Ovary (tissue), 10 donors: ENCODE measurements at regions of chr14 and their contacts with region 1.

Region 1: DNA sequence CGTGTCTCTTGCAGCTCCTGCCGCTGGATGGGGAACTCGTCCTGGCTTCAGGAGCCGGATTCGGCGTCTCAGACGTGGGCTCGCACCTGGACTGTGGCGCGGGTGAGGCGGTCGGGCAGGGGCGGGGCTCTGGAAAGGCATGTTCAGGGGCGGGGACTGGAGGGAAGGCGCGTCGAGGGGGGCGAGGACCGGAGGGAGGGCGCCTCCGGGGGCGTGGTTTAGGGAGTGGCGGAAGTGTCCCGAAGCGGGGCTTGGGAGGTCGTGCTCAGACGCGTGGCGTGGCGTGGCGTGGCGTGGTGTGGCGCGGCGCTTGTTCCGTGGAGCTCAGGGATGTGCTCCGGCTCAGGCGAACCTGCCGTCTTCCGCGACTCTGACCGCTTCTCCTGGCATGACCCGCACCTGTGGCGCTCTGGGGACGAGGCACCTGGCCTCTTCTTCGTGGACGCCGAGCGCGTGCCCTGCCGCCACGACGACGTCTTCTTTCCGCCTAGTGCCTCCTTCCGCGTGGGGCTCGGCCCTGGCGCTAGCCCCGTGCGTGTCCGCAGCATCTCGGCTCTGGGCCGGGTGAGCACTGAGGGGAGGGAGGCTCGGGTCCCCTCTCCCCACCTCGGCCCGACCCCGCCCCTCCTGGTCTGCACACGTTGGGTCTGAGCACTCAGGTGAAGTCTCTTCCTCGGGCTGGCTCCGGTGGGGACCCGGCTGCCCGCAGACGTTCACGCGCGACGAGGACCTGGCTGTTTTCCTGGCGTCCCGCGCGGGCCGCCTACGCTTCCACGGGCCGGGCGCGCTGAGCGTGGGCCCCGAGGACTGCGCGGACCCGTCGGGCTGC is 6.2 kb downstream of the AMN start:
- DNase-seq: peak; percentile 56 to 77 (median 60)
- H3K4me3 ChIP-seq: peak overlapping the region; percentile 27
- H3K27ac ChIP-seq: no peak overlapping the region
- H3K4me1 ChIP-seq: peaks cover 14% of the 10 kb centered on the region
- H3K27me3 ChIP-seq: no peaks in the 10 kb centered on the region
- CTCF ChIP-seq: no peak
- EP300 ChIP-seq: no peak
- POLR2A ChIP-seq: no peak

Region 2: DNA sequence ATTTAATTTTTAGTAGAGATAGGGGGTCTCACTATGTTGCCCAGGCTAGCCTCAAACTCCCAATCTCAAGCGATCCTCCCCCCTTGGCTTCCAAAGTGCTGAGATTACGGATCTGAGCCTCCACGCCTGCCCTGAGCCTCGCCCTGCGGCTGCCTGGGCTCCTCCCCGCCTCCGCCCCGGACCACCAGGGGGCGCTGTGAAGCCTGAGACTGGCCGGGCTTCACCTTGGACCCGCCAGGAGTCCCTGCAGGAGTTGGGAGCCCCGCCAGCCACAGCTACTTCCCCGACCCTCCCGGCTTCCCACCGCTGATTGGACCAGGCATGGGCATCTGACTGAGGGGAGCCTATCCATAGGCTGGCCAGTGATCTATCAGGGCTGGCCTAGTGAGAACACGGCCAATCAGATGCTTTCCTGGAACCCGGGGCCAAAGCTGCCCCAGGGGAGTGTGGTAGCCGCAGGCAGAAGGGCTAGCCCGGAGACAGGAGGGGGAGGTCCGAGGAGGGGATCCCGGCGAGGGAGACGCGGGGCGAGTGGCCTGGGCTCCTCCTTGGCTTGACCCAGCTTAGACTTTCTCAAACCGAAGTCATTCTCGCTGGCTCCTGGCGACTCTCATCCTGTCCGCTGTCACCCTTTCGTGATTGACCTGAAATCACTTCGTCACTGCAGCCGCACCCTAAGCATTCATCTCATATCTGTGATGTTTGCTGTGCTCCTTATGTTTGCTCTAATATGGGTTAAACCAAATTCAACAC is 404.0 kb before region 1 on chr14:
- intact Hi-C with region 1: loop called in 1 of 4 experiments (anchors 10 kb)
- DNase-seq: peak; percentile 96 to 99 (median 97)
- H3K4me3 ChIP-seq: peak overlapping the region; percentile 58
- H3K27ac ChIP-seq: peak overlapping the region in 1 of 2 donors; percentile 43
- H3K4me1 ChIP-seq: peaks cover 1% of the 10 kb centered on the region
- H3K27me3 ChIP-seq: no peaks in the 10 kb centered on the region
- CTCF ChIP-seq: peak; percentile 90 to 97 (median 91)
- EP300 ChIP-seq: no peak
- POLR2A ChIP-seq: no peak

Region 3: GRCh38 chr14:102694530-102695166 is 234.0 kb before region 1 on chr14:
- intact Hi-C with region 1: loop called in 1 of 4 experiments (anchors 10 kb)
- DNase-seq: peak; percentile 37 to 74 (median 44)
- H3K4me3 ChIP-seq: no peak overlapping the region
- H3K27ac ChIP-seq: no peak overlapping the region
- H3K4me1 ChIP-seq: peaks cover 1% of the 10 kb centered on the region
- H3K27me3 ChIP-seq: no peaks in the 10 kb centered on the region
- CTCF ChIP-seq: peak; percentile 53 to 71 (median 62)
- EP300 ChIP-seq: no peak
- POLR2A ChIP-seq: no peak